Dorsolateral prefrontal cortex (tissue), 120 donors: ENCODE measurements at regions of chr13 and their contacts with region 1.

Region 1: GRCh38 chr13:45119991-45120864 is at the start of gene GTF2F2:
- DNase-seq: peak; percentile 65 to 92 (median 81)
- H3K4me3 ChIP-seq: peak within 1 kb of the TSS; percentile 68 to 100 (median 92)
- H3K27ac ChIP-seq: peak within 1 kb of the TSS; percentile 26 to 95 (median 87)
- H3K27me3 ChIP-seq: no peaks in the 10 kb centered on the region
- CTCF ChIP-seq: peak in 36 of 56 donors; percentile 6 to 55 (median 31)
- total RNA-seq, gene GTF2F2: 9.9 to 19.8 (median 13.9) TPM

Region 2: GRCh38 chr13:45047394-45048310 is 72.6 kb before region 1 on chr13:
- intact Hi-C with region 1: loop called (anchors 5 kb)
- DNase-seq: peak; percentile 59 to 87 (median 84)
- H3K4me3 ChIP-seq: peak overlapping the region; percentile 37 to 77 (median 59)
- H3K27ac ChIP-seq: peak overlapping the region in 58 of 59 donors; percentile 32 to 97 (median 84)
- H3K27me3 ChIP-seq: no peaks in the 10 kb centered on the region
- CTCF ChIP-seq: peak; percentile 80 to 97 (median 89)

Region 3: DNA sequence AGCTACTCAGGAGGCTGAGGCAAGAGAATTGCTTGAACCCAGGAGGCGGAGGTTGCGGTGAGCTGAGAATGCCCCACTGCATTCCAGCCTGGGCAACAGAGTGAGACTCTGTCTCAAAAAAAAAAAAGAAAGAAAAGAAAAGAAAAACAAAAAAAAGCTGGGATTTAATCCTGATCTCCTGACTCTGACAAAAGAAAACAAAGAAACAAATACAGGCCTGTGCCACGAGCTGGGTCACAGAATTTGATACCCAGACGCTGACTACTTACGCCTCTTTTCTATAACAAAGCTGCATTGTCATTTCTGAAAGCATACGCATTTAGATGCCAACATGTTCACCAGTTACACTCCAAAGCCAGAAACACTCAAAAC is 18.1 kb before region 1 on chr13:
- intact Hi-C with region 1: loop called in 1 of 2 experiments (anchors 2 kb)
- DNase-seq: peak in 4 of 10 donors; percentile 48 to 63 (median 54)
- H3K4me3 ChIP-seq: peak overlapping the region in 21 of 59 donors; percentile 4 to 44 (median 23)
- H3K27ac ChIP-seq: peak overlapping the region; percentile 59 to 99 (median 92)
- H3K27me3 ChIP-seq: no peaks in the 10 kb centered on the region
- CTCF ChIP-seq: peak in 6 of 56 donors; percentile 7 to 34 (median 24)

Region 4: GRCh38 chr13:45180713-45181601 is 60.7 kb after region 1 on chr13:
- intact Hi-C with region 1: loop called in 1 of 2 experiments (anchors 10 kb)
- DNase-seq: no peak
- H3K4me3 ChIP-seq: no peak overlapping the region
- H3K27ac ChIP-seq: no peak overlapping the region
- H3K27me3 ChIP-seq: no peaks in the 10 kb centered on the region
- CTCF ChIP-seq: no peak

Region 5: DNA sequence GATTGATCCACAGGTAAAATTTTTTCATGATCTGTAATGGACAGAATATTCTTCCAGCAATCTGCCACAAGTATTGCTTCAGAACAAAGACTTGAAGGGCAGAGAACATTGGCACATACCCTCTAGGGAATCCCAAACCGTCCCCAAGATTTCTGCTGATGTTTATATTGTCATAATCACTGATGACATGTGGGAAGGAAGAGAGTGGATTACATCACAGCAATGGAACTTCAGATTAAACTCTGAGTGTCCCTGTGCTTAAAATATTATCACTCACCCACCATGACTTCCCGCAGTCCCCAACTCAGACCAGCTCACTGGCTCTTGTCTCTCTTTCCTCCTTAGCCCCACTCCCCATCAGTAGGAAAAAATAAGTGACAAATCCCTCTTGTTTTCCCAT is 229.2 kb after region 1 on chr13:
- intact Hi-C with region 1: no loop called
- DNase-seq: no peak
- H3K4me3 ChIP-seq: no peak overlapping the region
- H3K27ac ChIP-seq: no peak overlapping the region
- H3K27me3 ChIP-seq: no peaks in the 10 kb centered on the region
- CTCF ChIP-seq: no peak